CD4-positive, alpha-beta T cell (primary cell): ENCODE measurements at regions of chr6 and their contacts with region 1.

Region 1: DNA sequence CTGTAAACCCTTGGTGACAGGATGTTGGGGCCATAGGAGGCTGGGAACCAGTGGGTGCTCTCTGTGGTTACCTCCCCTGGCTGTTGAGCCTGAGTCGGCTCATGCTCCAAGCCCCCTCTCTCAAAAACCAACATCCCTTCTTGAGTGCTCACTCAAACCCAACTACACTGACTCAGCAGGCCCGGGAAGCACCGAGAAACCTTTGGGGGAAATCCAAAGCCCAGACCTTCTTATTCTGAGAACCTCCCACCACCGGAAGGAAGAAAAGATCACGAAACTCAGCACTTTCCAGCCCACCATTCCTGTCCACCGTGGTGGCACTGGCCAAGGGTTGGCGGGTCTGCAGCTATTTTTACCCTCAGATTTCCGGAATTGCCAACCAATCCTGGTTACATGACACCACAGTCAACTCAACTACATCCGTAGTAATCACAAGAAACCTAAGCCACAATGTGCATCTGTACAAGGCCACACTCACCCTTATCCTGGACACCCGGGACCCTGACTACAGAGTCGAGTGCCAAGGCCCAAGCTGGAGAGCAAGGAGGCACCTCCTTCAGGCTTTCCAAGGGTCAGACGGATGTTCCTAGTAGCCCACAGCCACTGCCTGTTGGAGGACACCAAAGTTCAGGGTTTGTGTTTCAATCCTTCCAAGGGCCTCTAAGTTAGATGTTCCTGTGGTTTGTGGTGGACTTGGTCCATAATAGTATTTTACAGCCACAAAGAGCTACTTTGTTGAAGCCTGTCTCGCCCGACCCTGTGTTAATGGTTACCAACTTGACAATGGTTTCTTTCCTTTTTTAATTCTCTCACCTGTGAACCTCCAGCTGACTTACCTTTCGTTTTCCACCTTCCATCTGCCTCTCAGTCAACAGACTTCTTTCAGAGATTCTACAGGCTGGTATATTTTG is 317.0 kb downstream of the CDC5L start:
- DNase-seq: peak in 1 of 14 experiments; percentile 5
- ATAC-seq: no peak
- H3K4me3 ChIP-seq: no peak overlapping the region
- H3K4me3 Mint-ChIP-seq: no peak overlapping the region
- H3K27ac ChIP-seq: no peak overlapping the region
- H3K27ac Mint-ChIP-seq: no peak overlapping the region
- H3K4me1 ChIP-seq: peaks cover 14% of the 10 kb centered on the region
- H3K4me1 Mint-ChIP-seq: no peaks in the 10 kb centered on the region
- H3K27me3 ChIP-seq: no peaks in the 10 kb centered on the region
- H3K27me3 Mint-ChIP-seq: no peaks in the 10 kb centered on the region
- CTCF ChIP-seq: no peak

Region 2: DNA sequence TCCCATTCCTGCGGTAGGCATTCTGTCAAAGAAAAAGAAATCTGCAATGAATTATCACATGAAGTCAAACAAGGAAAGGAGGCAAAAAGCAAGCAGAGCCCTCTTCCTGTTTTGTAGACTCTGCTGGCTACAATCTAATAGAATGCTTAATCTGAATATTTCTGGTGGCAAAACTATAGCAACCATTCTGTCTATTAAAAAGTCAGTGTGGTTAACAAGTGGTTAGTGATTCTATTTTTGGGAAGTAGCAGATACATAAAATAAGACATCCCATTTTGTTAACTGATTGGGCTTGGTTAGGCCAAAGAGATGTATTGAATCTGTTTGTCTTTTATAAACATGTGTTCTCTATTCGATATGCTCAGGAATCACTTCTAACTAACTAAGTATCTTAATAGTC is 125.3 kb after region 1 on chr6:
- CTCF ChIA-PET with region 1: no interaction called
- POLR2A ChIA-PET with region 1: no interaction called
- intact Hi-C with region 1: loop called in 1 of 2 experiments (anchors 10 kb)
- DNase-seq: peak in 1 of 14 experiments; percentile 45
- ATAC-seq: no peak
- H3K4me3 ChIP-seq: no peak overlapping the region
- H3K4me3 Mint-ChIP-seq: no peak overlapping the region
- H3K27ac ChIP-seq: no peak overlapping the region
- H3K27ac Mint-ChIP-seq: peak overlapping the region; percentile 16
- H3K4me1 ChIP-seq: peaks cover 10% of the 10 kb centered on the region
- H3K4me1 Mint-ChIP-seq: peaks cover 43% of the 10 kb centered on the region
- H3K27me3 ChIP-seq: no peaks in the 10 kb centered on the region
- H3K27me3 Mint-ChIP-seq: no peaks in the 10 kb centered on the region
- CTCF ChIP-seq: no peak